Calu3 (cell line): ENCODE measurements at regions of chr10 and their contacts with region 1.

Region 1: DNA sequence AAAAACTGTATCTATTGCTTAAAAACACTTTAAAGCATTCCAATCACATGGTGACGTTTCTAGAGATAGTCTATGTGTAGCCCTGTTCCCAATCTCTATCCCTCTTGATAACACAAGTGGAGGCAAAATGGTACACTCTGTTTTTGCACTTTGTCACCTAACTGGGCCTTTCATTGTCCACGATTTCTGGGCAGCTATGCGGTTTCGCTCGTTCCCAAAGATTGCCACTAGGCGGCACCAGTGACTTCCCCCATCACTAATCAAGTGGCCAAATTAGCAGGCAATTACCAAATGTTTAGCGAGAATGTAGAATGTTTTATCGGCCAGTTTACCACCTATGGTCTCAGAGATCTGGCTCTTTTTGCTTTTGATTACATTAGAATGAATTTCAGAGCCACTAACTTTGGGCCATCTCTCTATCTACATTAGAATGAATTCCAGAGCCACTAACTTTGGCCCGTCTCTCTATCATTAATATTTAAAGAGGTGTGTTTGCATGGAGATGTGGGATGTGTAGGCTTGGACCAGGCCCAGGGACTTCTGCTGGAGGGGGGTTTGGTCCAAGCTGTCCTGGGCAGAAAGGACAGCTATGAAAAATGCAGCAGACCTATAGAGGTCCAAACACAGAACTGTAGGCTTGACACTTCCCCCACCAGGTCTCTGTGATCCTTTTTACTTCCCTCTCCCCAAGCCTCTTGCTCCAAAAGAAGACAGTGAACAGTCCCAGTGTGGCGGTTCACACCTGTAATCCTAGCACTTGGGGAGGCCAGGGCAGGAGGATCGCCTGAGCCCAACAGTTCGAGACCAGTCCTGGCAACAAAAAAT is 90.1 kb downstream of the EPC1 start:
- DNase-seq: peak; percentile 57
- H3K4me3 Mint-ChIP-seq: no peak overlapping the region
- H3K27ac Mint-ChIP-seq: no peak overlapping the region
- H3K4me1 Mint-ChIP-seq: peaks cover 12% of the 10 kb centered on the region
- H3K27me3 Mint-ChIP-seq: no peaks in the 10 kb centered on the region
- CTCF ChIP-seq: peak; percentile 79

Region 2: GRCh38 chr10:32149252-32149955 is 107.4 kb before region 1 on chr10:
- CTCF ChIA-PET with region 1: no interaction called
- intact Hi-C with region 1: no loop called
- DNase-seq: no peak
- H3K4me3 Mint-ChIP-seq: no peak overlapping the region
- H3K27ac Mint-ChIP-seq: no peak overlapping the region
- H3K4me1 Mint-ChIP-seq: peaks cover 11% of the 10 kb centered on the region
- H3K27me3 Mint-ChIP-seq: no peaks in the 10 kb centered on the region
- CTCF ChIP-seq: no peak

Region 3: DNA sequence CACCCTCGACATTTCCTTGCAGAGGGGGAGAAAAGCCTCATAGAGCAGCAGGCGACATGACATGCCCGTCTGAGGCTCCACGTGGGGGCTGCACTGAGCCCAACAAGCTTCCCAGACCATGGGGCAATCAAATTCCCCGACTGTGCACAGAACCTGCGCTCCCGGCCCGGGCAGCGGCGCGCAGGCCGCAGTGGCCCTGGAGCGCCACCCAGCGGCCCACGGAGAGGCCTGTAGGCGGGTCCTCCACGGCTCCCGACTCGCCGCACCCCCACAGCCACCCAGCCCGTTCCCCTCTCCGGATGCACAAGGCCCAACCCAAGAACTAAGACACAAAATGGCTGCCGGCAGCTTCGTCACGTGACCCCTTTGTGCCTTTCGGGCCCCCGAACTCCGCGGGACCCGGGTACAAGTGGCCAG is 89.3 kb after region 1 on chr10:
- CTCF ChIA-PET with region 1: interaction called, 5 read pairs
- intact Hi-C with region 1: loop called (anchors 2 kb)
- DNase-seq: peak; percentile 98
- H3K4me3 Mint-ChIP-seq: peak overlapping the region; percentile 86
- H3K27ac Mint-ChIP-seq: peak overlapping the region; percentile 98
- H3K4me1 Mint-ChIP-seq: peaks cover 28% of the 10 kb centered on the region
- H3K27me3 Mint-ChIP-seq: no peaks in the 10 kb centered on the region
- CTCF ChIP-seq: peak; percentile 87

Region 4: DNA sequence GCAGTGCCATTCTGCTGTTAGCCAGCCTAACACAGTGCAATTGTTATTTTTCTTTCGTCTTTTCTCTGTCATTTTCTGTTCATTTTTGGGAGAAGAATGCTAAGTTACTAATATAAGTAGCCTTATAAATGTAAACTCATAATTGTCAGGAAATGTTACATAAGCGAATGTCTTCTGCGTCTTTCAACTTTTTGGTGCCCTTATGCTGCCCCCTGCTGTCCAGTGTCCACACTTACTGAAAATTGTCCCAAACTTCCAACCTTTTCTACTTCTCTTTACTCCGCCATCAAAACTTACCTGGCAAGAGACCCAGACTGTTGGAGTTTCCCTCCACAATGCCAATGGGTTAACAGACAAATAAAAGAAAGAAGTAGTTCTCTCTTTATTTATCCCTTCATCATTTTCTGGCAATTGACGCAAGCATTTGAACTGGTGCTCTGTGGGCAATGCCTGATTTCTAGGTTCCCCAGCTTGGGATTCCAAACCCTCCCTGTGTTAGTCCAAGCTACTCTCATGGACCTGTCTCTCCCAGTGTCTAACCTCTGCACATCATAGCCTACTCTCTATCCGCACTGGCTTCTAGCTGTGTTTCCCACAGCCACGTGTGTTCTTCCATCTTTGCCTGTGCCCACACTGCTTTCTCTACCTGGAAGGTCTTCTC is 111.1 kb after region 1 on chr10:
- CTCF ChIA-PET with region 1: interaction called, 4 read pairs
- intact Hi-C with region 1: loop called (anchors 2 kb)
- DNase-seq: peak; percentile 71
- H3K4me3 Mint-ChIP-seq: no peak overlapping the region
- H3K27ac Mint-ChIP-seq: no peak overlapping the region
- H3K4me1 Mint-ChIP-seq: peaks cover 22% of the 10 kb centered on the region
- H3K27me3 Mint-ChIP-seq: no peaks in the 10 kb centered on the region
- CTCF ChIP-seq: peak; percentile 74